ENCODE measurements at regions of chr4 and their contacts with region 1.

Region 1: DNA sequence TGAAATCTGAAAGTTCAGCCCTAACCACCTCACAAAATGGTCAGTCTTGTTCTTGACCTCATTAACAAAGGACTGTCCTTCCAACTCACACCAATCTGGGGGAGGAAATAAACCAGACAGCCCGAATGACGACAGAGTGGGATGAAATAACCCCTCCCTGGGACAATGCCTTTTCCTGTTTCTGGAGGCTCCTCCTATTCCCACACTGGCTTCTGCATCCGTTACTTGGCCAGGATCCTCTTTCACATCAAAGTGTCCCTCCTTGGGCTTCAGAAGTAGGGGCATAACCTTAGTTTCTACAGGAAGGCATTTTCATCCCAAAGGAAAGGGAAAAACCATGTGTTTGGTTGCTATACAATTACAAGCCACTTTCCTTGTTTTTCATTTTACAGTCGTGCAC is 59.8 kb upstream of the RPL34 start:
- DNase-seq: no peak
- H3K4me3 Mint-ChIP-seq: no peak overlapping the region
- H3K27ac Mint-ChIP-seq: no peak overlapping the region
- H3K4me1 Mint-ChIP-seq: peaks cover 8% of the 10 kb centered on the region
- H3K27me3 Mint-ChIP-seq: no peaks in the 10 kb centered on the region

Region 2: GRCh38 chr4:108533245-108533844 is 27.3 kb before region 1 on chr4:
- CTCF ChIA-PET with region 1: no interaction called
- intact Hi-C with region 1: loop called (anchors 2 kb)
- DNase-seq: no peak
- H3K4me3 Mint-ChIP-seq: peak overlapping the region; percentile 19
- H3K27ac Mint-ChIP-seq: no peak overlapping the region
- H3K4me1 Mint-ChIP-seq: peaks cover 72% of the 10 kb centered on the region
- H3K27me3 Mint-ChIP-seq: no peaks in the 10 kb centered on the region

Region 3: DNA sequence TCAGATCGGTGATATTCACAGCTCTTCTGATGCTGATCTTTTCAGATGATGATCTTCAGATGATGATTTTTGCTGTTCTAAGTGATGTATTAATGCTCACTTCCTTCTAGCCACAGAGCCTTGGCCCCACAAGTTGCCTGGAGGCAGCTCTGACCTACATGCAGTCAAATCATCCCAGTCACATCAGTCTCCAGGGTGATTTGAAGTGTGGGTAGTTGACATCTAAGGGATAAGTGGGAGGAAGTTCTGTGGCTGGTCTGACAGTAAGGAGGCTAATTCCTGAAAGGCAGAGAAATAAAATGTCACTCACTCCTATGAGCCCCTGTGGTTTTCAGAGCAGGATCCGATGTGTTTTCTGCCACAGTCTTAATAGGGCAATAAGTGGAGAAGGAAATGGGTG is 20.1 kb before region 1 on chr4:
- CTCF ChIA-PET with region 1: no interaction called
- intact Hi-C with region 1: loop called (anchors 2 kb)
- DNase-seq: peak; percentile 27
- H3K4me3 Mint-ChIP-seq: no peak overlapping the region
- H3K27ac Mint-ChIP-seq: no peak overlapping the region
- H3K4me1 Mint-ChIP-seq: peaks cover 29% of the 10 kb centered on the region
- H3K27me3 Mint-ChIP-seq: no peaks in the 10 kb centered on the region